ENCODE measurements at regions of chr15 and their contacts with region 1.

Region 1: DNA sequence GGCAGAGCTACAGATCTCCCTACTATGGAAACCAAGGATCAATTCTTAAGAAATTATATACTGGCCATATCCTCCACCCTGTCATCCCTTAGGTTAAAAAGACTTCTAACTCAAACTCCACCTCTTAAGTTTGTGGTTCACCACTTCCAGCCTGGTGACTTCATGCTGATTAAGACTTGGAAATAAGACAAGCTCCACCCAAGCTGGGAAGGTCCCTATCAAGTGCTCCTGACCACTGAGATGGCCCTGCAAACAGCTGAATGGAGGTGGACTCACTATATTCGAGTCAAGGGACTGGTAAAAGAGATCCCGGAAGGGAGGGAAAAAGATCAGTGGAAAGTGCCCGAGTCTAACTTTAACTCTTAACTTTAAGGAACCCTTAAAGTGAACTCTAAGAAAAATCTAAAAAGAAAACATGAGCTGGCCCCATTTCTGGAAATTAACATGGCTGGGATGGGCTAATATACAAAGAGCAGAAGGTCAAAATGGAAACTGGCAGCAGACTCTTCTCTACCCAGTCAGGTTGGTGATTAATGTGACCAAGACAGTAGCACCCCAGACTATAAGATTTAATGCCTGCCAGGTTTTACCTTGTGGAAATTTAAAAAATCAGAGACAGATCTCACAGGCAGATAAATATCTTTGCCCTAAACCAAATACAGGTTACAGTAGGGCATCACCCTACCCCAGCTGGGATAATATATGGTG is 43.9 kb downstream of the PPCDC start:
- DNase-seq: peak; percentile 93
- H3K4me3 Mint-ChIP-seq: peak overlapping the region; percentile 82
- H3K27ac Mint-ChIP-seq: peak overlapping the region; percentile 96
- H3K4me1 Mint-ChIP-seq: peaks cover 64% of the 10 kb centered on the region
- H3K27me3 Mint-ChIP-seq: no peaks in the 10 kb centered on the region

Region 2: GRCh38 chr15:75042730-75043508 is 24.4 kb before region 1 on chr15:
- intact Hi-C with region 1: loop called (anchors 1 kb)
- DNase-seq: peak; percentile 92
- H3K4me3 Mint-ChIP-seq: peak overlapping the region; percentile 52
- H3K27ac Mint-ChIP-seq: peak overlapping the region; percentile 81
- H3K4me1 Mint-ChIP-seq: peaks cover 64% of the 10 kb centered on the region
- H3K27me3 Mint-ChIP-seq: no peaks in the 10 kb centered on the region

Region 3: DNA sequence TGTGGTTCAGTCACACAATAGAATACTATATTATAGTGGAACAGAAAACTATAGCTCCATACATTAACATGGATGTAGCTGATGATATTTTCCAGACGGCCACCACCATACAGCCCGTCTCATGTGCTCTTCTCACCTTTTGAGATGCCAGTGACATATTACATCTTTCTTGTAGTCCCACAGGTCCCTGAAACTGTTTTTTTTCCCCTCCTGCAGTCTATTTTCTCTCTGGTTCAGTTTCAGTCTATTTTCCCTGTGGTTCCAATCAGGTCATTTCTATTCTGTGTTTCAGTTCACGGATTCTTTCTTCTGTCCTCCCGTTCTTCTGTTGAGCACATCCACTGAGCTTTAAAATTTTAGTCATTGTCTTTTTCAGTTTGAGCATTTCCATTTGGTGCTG is 28.3 kb after region 1 on chr15:
- intact Hi-C with region 1: loop called (anchors 1 kb)
- DNase-seq: no peak
- H3K4me3 Mint-ChIP-seq: no peak overlapping the region
- H3K27ac Mint-ChIP-seq: no peak overlapping the region
- H3K4me1 Mint-ChIP-seq: peaks cover 9% of the 10 kb centered on the region
- H3K27me3 Mint-ChIP-seq: peaks cover 6% of the 10 kb centered on the region

Region 4: GRCh38 chr15:75104804-75105535 is 37.7 kb after region 1 on chr15:
- intact Hi-C with region 1: loop called (anchors 1 kb)
- DNase-seq: peak; percentile 87
- H3K4me3 Mint-ChIP-seq: peak overlapping the region; percentile 47
- H3K27ac Mint-ChIP-seq: peak overlapping the region; percentile 88
- H3K4me1 Mint-ChIP-seq: peaks cover 35% of the 10 kb centered on the region
- H3K27me3 Mint-ChIP-seq: peaks cover 7% of the 10 kb centered on the region